ENCODE measurements at regions of chr3 and their contacts with region 1.

Region 1: DNA sequence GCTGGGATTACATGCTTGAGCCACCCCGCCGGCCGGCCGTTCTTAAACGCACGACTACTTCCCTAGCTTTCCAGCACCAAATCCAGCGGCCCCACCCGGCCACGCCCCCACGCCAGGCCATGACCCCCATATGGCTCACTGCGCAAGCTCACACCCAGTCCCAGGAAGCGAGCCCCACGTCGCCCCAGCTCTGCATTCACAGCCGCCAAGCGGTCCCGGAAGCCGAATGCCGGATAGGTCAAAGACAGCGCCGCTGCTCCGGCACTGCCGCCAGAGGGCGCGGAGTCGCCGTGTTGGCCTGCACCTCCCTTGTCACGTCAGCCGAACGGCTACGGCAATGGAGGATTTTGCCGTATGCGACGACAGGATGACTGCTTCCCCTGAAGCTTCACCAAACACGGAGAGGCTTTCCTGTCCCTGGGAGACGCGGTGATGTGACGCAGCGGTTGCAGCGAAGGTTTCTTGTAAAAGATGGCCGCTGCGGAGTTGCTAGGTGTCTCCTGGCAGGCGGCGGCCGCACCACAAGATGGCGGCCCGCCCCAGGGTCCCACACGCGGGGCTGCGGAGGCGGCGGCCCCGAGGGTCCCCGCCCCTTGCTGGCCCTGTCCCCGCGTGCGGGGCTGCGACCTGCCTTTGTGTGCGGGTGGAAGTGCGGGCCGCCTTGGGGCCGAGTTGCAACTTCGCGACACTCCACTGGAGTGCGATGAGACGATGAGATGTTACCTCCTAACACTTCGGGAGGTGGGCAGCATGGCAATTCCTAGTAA is 30.2 kb upstream of the RPN1 start:
- DNase-seq: peak; percentile 99
- H3K4me3 ChIP-seq: peak overlapping the region; percentile 53 to 73 (median 62)
- H3K27ac ChIP-seq: peak overlapping the region; percentile 93 to 96 (median 95)
- H3K4me1 ChIP-seq: peaks cover 0 to 13% (median 9%) of the 10 kb centered on the region in 4 donors
- H3K27me3 ChIP-seq: no peaks in the 10 kb centered on the region
- CTCF ChIP-seq: peak; percentile 68 to 100 (median 93)
- EP300 ChIP-seq: no peak
- POLR2A ChIP-seq: peak in 2 of 4 donors; percentile 65 to 75

Region 2: DNA sequence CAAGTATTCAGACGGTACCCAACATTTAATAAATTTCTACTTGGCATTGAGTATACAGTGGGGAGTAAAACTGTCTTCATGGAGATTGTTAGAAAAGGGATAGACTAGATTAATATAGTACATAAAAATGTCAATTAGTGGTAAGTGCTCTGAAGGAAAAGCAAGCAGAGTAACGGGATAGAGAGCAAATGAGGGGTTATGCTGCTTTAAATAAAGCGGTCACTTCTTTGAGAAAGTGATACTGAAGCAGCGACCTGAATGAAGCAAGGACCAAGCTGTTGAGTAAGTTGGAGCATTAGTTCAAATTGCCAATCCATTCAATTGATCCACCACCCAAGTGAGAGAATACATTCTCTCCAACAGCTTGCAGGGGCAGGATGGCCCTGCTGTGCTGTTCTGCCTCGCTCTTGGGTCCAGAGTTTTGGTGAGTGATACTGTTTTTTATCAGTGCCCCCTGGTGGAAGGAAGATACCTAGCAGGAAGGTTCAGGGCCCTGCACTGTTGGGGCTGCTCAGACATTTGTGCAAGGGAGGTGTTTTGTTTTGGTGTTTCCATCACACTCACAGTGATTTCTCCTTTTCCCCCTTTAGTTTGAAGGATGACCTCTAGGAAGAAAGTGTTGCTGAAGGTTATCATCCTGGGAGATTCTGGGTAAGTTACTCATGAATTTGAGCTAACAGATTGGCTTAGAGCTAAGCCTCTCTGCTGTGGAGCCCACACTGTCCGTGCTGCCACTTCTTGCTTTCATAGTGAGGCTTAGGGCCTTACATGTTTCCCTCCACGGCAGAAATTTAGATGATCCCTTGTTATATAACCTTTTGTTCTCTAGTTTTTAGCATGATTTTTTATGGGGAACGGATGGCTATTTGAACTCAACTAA is 114.2 kb after region 1 on chr3:
- intact Hi-C with region 1: loop called (anchors 5 kb)
- DNase-seq: peak; percentile 48 to 86
- H3K4me3 ChIP-seq: no peak overlapping the region
- H3K27ac ChIP-seq: peak overlapping the region in 3 of 5 donors; percentile 49 to 61 (median 58)
- H3K4me1 ChIP-seq: peaks cover 15 to 60% (median 35%) of the 10 kb centered on the region in 4 donors
- H3K27me3 ChIP-seq: no peaks in the 10 kb centered on the region
- CTCF ChIP-seq: peak in 5 of 7 experiments; percentile 75 to 90 (median 89)
- EP300 ChIP-seq: no peak
- POLR2A ChIP-seq: no peak

Region 3: DNA sequence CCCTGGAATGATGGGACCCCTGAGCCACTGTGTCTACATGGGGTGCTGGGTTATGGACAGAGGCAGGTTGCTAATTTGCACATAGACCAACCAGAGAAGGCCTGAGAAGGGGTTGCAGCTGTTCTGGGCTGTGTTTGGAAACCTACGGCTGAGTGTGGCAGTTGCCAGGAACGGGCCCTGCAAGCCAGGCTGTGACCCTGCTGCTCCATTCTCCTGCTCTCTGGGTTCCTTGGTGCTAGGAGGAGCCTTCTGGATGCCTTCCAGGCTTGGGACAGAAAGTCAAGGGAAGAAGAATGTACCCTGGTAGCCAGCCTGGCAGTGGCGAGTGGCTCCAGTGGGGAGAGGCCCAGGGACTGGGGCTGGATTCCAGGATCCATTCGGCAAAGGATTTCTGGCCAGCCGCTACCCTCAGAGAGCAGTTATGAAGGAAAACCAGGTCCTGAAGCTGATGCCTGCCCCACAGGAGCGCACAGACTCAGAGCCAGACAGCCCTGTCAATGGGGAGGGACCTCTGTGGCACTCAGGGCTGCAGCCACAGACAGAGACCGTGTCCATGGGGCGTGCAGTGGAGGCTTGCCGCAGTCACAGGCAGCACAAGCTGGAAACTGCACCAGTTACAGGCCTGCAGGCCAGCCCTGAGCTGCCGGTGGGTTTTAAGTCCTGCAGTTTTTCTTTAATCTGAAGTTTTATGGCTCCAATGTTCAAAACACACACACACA is 143.5 kb after region 1 on chr3:
- intact Hi-C with region 1: no loop called
- DNase-seq: no peak
- H3K4me3 ChIP-seq: no peak overlapping the region
- H3K27ac ChIP-seq: no peak overlapping the region
- H3K4me1 ChIP-seq: peaks cover 0 to 6% (median 0%) of the 10 kb centered on the region in 4 donors
- H3K27me3 ChIP-seq: no peaks in the 10 kb centered on the region
- CTCF ChIP-seq: no peak
- EP300 ChIP-seq: no peak
- POLR2A ChIP-seq: no peak